Activated CD4-positive, alpha-beta T cell treated with anti-CD3 and anti-CD28 coated beads, Interleukin-2, amount 10 ng/mL, durations not matched to agents 7 days and 5 days (primary cell): ENCODE measurements at regions of chr17 and their contacts with region 1.

Region 1: DNA sequence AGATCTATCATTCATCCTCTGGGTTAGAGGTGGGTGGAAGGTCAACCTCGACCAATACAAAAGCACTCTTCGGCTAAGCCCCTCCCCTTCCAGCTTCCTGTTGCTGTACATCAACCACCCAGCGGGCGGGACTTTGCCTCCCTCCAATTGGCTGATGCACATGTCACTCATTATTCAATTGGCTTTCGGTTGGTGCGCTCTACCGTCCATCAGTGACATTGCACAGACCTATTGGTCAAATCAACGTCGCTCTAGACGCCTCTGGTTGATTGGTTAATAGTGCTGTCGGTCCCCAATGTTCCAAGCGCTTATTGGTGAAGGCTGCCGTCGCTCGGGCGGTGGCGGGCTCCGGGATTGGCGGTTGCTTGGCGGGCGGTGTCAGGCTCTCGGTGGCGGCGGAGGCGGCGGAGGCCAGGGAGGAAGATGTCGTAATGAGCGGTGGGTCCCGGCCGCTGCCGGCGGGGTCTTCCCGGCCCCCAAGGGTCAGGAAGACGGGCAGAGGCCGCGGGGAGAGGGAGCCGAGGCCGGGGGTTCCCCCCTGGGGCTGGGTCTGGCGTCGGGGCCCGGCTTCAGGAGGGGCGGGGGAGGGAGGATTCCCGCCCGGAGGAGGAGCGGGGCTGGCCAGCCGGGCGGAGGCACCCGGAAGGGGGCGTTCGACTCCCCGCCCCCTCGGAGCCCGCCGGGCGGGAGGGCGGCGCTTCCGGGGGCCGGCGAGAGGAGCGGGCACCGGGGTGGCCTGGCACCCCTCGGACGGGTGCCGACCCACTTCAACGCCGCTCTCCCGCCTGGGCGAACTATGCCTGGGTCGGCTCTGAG is at the start of gene SP2:
- DNase-seq: peak; percentile 100
- H3K4me3 Mint-ChIP-seq: peak within 1 kb of the TSS; percentile 93
- H3K27ac Mint-ChIP-seq: peak within 1 kb of the TSS; percentile 100
- H3K4me1 Mint-ChIP-seq: peaks cover 54% of the 10 kb centered on the region
- H3K27me3 Mint-ChIP-seq: no peaks in the 10 kb centered on the region
- total RNA-seq, gene SP2: 27.6 to 33.8 TPM

Region 2: DNA sequence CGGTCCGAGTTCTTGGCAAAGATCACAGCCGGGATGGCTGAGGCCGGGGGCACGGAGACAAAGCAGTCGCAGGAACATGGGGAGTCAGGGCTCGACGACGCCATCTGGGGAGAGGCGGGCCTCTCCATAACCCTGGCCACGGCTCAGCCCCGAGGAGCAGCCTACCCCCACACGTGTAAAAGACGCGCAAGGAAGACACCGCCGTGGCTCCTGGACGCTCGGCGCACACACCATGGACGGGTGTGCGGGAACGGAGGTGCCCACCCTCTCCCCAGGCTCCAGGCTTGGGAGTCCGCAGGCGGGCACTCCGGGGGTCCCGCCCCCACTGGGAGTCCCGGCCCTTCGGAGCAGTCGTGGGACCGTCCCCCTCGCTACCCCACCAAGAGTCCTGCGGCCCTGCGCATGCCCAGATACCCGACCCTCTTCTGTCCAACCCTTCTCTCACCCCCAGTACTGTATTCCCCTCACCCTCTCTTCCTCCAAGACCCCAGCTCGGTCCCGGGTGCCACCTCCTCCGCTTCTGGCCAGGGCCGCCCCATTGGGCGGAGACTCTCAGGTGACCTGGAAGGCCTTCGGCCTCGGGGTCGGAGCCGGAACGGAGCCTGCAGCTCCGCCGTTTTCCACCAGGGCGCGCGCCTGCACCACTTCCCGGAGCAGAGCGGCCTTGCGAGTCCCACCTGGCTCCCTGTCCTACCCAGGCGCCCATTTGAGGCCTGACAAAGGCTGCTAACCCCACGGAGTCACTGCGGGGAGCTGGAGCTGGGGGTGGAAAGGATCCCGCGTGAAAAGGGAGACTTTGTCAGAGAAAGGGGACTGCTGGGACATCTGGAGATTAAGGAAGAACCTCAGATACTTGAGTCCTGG is 55.1 kb before region 1 on chr17 and contains the start of gene SCRN2:
- CTCF ChIA-PET with region 1: interaction called, 344 read pairs
- POLR2A ChIA-PET with region 1: interaction called, 3 read pairs
- DNase-seq: peak; percentile 87
- H3K4me3 Mint-ChIP-seq: peak within 1 kb of the TSS; percentile 98
- H3K27ac Mint-ChIP-seq: peak within 1 kb of the TSS; percentile 91
- H3K4me1 Mint-ChIP-seq: peaks cover 37% of the 10 kb centered on the region
- H3K27me3 Mint-ChIP-seq: peaks cover 17% of the 10 kb centered on the region
- total RNA-seq, gene SCRN2: 26.8 to 33.2 TPM